Activated CD4-positive, alpha-beta T cell treated with anti-CD3 and anti-CD28 coated beads, Interleukin-2, amount 10 ng/mL, durations not matched to agents 24 days and 14 days (primary cell): ENCODE measurements at regions of chr1 and their contacts with region 1.

Region 1: GRCh38 chr1:165827268-165828102 is at the start of gene UCK2:
- DNase-seq: peak; percentile 88
- H3K4me3 Mint-ChIP-seq: peak within 1 kb of the TSS; percentile 97
- H3K27ac Mint-ChIP-seq: peak within 1 kb of the TSS; percentile 95
- H3K4me1 Mint-ChIP-seq: peaks cover 16% of the 10 kb centered on the region
- H3K27me3 Mint-ChIP-seq: peaks cover 16% of the 10 kb centered on the region
- total RNA-seq, gene UCK2: 108 and 110 TPM in 2 replicates

Region 2: DNA sequence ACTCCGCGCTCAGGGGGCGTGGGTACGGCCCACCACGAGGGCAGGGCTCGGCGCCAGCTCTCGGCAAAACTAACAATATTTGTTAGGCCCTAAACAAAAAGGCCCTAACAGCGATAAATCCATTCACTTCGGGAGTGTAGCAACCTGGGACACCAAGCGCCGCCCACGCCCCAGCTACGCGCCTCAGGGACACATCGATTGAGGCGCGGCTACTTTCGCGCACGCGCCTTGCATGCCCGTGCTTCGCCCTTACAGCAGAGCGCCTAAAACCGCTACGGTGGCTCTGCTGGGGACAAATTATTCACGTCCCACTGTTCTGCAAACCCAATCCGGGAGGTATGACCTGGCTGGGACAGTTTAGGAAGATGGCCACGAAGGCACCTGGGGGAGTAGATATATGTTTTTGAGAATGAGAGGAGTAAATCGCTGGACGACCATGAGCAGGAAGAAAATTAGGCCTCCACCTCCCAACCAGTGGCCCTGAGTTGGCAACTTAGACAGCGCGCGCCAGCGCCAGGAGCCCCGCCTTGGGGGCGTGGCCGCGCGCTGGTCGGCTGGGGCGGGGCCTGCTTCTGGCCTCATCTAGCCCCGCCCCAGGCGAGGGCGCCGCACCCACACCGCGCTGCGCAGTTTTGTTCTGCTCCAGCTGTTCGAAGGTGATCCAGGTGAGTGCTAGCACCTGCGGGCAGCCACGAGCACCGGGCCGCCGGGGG is 196.7 kb before region 1 on chr1 and contains the start of gene MGST3:
- intact Hi-C with region 1: loop called (anchors 1 kb)
- DNase-seq: peak; percentile 98
- H3K4me3 Mint-ChIP-seq: no peak within 1 kb of the TSS
- H3K27ac Mint-ChIP-seq: no peak within 1 kb of the TSS
- H3K4me1 Mint-ChIP-seq: peaks cover 17% of the 10 kb centered on the region
- H3K27me3 Mint-ChIP-seq: peaks cover 10% of the 10 kb centered on the region
- total RNA-seq, gene MGST3: 25.7 and 28.1 TPM in 2 replicates

Region 3: DNA sequence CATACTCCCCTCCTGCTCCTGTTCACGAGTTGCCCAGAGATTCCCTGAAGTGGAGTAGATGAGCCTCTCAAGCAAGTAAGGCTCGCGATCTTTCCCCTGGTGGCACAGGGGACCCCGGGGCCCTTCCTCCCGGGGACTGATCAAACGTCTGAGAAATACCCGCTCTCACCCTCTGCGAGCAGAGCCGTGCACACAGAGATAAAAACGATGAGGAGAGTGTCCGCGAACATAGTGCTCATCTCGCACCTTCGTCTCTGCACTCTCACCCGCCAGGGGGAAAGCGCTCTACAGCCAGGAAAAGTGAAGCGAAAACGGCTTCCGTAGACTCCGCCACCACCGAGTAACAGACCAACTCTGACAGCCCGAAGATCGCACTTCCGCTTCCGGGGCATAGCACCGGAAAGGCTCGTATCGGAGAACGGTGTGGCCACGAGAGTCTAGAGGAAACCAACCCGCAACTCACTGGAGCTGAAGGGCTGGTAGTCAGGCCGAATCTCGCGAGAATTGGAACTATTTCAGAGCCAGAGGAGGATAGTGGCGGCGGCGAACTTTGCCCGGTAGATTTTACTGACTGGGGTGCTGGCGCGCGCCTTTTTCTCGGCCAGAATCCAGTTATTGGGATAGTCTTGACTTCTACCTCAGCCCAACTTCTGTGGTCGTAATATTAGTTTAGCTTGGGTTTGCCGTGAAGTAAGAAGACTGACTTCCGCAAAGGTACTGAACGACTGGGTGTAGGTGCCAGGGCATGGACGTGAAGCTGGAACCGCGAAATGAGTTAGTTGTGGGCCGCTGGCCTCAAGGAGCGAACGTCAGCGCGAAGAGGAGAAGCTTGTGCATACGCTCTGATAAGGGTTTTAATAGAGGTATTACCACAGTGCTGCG is 58.7 kb before region 1 on chr1 and contains the start of gene TMCO1:
- intact Hi-C with region 1: loop called (anchors 1 kb)
- DNase-seq: peak; percentile 98
- H3K4me3 Mint-ChIP-seq: peak within 1 kb of the TSS; percentile 98
- H3K27ac Mint-ChIP-seq: peak within 1 kb of the TSS; percentile 100
- H3K4me1 Mint-ChIP-seq: peaks cover 41% of the 10 kb centered on the region
- H3K27me3 Mint-ChIP-seq: no peaks in the 10 kb centered on the region
- total RNA-seq, gene TMCO1: 91.8 and 94.3 TPM in 2 replicates

Region 4: DNA sequence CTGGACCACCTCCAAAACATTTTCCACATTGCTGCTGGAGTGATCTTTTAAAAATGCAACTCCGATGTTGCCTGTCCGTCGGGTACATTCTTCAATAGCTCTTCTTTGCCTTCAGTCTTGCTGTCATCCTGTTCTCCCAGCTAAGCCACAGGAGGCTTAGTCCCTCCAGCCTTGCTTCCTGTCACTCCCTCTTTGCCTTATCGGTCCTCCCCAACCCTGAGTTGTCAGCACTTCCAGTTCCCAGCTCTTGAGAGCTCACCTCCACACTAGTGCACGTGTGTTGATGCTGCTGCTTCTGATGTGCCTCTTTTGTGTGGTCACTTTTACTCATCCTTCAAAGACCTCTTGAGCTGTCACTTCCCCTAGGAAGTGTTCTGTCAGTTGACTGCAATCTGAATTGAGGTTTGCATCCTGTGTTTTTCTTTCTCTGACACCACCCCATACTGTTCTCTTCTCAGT is 15.2 kb after region 1 on chr1:
- intact Hi-C with region 1: loop called (anchors 2 kb)
- DNase-seq: peak; percentile 71
- H3K4me3 Mint-ChIP-seq: peak overlapping the region; percentile 26
- H3K27ac Mint-ChIP-seq: peak overlapping the region; percentile 10
- H3K4me1 Mint-ChIP-seq: peaks cover 59% of the 10 kb centered on the region
- H3K27me3 Mint-ChIP-seq: no peaks in the 10 kb centered on the region

Region 5: DNA sequence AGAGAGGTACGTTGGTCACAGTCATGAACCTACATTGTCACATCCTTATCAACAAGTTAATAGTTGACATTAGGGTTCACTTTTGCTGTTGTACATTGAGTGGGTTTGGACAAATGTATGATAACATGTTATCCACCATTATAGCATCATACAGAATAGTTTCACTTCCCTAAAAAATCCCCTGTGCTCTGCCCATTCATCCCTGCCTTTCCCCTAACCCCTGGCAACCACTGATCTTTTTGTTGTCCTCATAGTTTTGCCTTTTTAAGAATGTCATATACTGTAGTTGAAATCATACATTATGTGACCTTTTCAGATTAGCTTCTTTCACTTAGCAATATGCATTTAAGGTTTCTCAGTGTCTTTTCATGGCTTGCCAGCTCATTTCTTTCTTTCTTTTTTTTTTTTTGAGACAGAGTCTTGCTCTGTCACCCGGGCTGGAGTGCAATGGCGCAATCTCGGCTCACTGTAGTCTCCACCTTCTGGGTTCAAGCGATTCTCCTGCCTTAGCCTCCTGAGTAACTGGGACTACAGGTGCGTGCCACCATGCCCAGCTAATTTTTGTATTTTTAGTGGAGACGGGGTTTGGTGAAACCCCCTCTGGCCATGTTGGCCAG is 50.6 kb after region 1 on chr1:
- intact Hi-C with region 1: loop called (anchors 2 kb)
- DNase-seq: no peak
- H3K4me3 Mint-ChIP-seq: no peak overlapping the region
- H3K27ac Mint-ChIP-seq: peak overlapping the region; percentile 4
- H3K4me1 Mint-ChIP-seq: peaks cover 44% of the 10 kb centered on the region
- H3K27me3 Mint-ChIP-seq: no peaks in the 10 kb centered on the region

Region 6: DNA sequence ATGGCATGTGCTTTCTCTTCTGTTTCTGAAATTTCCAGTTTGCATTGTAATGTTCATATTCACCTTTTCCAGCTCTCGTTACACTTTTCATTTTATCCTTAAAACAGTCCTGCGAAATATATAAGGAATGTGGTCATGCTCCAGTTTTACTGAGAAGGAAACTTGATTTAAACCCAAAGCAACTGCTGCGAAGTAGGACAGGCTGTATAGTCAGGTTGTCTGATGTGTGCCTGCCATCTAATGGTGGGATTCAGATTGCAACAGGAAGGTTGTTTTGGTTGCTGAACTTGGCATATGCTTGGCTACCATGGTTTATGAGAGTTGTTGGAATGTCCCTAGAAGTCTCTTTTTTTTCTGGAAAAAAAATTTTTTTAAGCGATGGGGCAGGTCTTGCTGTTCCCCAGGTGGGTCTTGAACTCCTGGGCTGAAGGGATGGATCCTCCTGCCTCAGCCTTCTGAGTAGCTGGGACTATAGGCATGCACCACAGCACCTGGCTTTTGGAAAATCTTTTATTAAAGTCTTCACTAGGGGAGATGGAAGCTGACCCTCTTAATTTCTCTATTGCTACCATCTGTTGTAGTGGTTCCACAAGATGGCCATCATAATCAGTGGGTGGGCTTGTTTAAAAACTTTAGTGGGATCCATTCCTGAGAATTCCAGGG is 86.8 kb after region 1 on chr1:
- intact Hi-C with region 1: loop called (anchors 1 kb)
- DNase-seq: peak; percentile 93
- H3K4me3 Mint-ChIP-seq: no peak overlapping the region
- H3K27ac Mint-ChIP-seq: no peak overlapping the region
- H3K4me1 Mint-ChIP-seq: peaks cover 5% of the 10 kb centered on the region
- H3K27me3 Mint-ChIP-seq: no peaks in the 10 kb centered on the region

Region 7: DNA sequence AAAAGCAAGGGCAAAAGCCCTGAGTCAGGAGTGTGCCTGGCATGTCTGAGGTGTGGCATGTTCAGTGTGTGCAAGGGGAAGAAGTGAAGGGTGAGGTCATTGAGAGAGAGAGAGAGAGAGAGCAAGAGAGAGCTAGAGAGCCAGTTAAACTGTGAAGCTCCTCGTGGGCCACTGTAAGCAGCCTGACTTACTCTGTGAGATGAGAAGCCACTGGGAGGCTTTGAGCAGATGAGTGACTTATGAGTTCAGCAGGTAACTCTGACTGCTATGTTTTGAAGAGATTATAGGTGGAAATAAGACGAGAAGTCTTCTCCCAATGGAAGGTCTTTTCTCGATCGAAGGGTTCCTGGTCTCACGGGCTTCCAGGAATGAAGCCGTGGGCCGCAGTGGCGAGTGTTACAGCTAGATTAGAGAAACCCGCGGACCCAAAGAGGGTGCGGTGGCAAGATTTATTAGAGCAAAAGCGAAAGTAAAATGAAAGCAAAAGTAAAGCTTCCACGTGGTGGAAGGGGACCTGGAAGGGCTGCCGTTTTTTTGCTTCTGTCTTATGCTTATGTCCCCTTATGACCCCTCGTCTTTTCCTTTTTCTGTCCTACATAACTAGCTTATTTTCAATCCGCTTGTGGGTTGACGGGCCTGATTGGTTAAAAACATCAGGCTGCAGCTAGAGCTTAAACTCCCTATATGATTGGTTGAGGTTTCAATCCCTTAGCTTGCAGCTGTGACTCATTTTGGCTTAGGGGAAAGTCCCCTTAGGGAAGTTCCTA is 662.4 kb after region 1 on chr1:
- intact Hi-C with region 1: loop called (anchors 5 kb)
- DNase-seq: peak; percentile 85
- H3K4me3 Mint-ChIP-seq: no peak overlapping the region
- H3K27ac Mint-ChIP-seq: no peak overlapping the region
- H3K4me1 Mint-ChIP-seq: peaks cover 9% of the 10 kb centered on the region
- H3K27me3 Mint-ChIP-seq: peaks cover 1% of the 10 kb centered on the region